Breast epithelium (tissue), 4 donors: ENCODE measurements at regions of chr11 and their contacts with region 1.

Region 1: GRCh38 chr11:110613197-110613918 is 98.9 kb downstream of the ARHGAP20 start:
- DNase-seq: no peak
- H3K4me3 ChIP-seq: no peak overlapping the region
- H3K27ac ChIP-seq: peak overlapping the region in 1 of 2 donors; percentile 8
- H3K4me1 ChIP-seq: no peaks in the 10 kb centered on the region
- H3K27me3 ChIP-seq: no peaks in the 10 kb centered on the region
- CTCF ChIP-seq: no peak
- POLR2A ChIP-seq: no peak

Region 2: DNA sequence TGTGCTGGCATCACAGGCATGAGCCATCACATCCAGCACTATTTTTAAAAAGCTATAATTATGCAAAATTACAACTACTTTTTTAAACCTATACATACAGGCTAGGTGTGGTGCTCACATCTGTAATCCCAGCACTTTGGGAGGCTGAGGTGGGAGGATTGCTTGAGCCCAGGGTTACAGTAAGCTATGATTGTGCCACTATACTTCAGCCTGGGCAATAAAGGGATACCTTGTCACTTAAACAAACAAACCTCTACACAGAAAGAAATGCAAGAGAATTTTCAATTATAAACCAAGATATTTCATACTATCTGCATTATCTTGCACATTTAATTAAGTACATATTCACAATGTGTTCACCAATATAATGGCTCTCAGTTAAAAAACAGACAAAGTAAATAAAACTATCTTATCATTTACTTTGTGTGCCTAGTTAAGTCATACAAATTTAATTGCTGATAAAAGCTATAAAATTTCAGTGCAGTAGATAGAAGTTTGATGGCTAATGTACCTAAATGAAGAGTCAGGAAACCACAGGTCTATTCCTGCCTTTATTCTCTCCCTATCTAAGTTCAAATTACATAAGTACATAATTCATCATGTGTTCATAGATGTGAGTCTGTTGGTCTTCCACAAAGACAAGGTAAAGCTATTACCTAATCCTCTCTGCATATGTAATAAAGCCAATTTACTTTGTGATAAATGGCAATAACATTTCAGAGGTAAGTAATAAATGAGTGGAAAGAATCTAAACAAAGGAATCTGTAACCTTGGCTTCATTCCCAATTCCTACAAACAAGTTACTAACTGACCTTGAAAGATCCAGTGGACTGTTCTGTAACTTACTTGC is 308.0 kb before region 1 on chr11:
- intact Hi-C with region 1: loop called (anchors 5 kb)
- DNase-seq: no peak
- H3K4me3 ChIP-seq: no peak overlapping the region
- H3K27ac ChIP-seq: no peak overlapping the region
- H3K4me1 ChIP-seq: no peaks in the 10 kb centered on the region
- H3K27me3 ChIP-seq: no peaks in the 10 kb centered on the region
- CTCF ChIP-seq: no peak
- POLR2A ChIP-seq: no peak

Region 3: DNA sequence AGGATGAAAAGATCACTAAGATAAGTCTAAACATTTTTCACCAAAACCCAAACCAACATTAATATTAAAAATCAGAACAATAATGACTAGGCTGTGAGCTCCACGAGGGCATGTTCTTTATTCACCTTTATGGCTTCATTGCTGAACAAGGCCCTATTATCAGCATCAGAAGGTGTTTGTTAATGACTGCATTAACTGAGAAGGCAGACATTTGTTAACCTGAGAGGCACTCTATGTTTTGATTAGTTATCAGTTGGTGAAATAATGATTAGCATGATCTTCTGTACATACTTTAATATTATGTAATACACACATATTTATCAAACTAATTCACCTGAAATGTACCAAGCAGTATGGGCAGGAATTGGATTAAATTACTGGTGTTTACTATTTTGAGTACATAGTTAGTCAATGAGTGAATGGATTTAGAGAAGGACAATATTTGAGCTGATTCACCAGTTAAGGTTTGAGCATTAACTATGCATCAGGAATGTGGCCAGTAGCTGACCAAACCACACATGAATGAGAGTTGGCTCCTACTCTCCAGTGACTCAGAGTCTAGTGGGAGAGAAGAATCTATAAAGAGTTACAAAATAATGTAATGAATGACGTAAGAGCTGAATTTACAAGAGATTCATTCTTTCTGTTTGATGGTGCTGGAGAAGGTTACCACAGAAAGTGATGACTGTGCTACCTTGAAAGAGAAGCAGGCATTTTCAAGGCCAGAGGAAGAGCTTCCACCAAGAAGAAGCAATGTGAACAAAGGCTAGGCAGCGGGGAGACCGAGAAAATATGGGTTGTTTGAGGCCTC is 1543.8 kb after region 1 on chr11:
- intact Hi-C with region 1: no loop called
- DNase-seq: peak in 1 of 2 donors; percentile 52
- H3K4me3 ChIP-seq: no peak overlapping the region
- H3K27ac ChIP-seq: peak overlapping the region; percentile 23 to 50
- H3K4me1 ChIP-seq: peaks cover 0 to 4% of the 10 kb centered on the region in 2 donors
- H3K27me3 ChIP-seq: no peaks in the 10 kb centered on the region
- CTCF ChIP-seq: no peak
- POLR2A ChIP-seq: no peak